H1 (cell line): ENCODE measurements at regions of chr11 and their contacts with region 1.

Region 1: GRCh38 chr11:57562596-57562995 is 4.9 kb downstream of the UBE2L6 start:
- DNase-seq: no peak
- H3K4me3 ChIP-seq: no peak overlapping the region
- H3K27ac ChIP-seq: no peak overlapping the region
- H3K4me1 ChIP-seq: peaks cover 4 to 7% (median 4%) of the 10 kb centered on the region in 4 experiments; a peak in 6 of 7 replicates
- H3K27me3 ChIP-seq: no peaks in the 10 kb centered on the region
- CTCF ChIP-seq: peak in 2 of 3 experiments; percentile 54 to 57; a peak in 3 of 4 replicates
- EP300 ChIP-seq: no peak
- POLR2A ChIP-seq: no peak
- RAD21 ChIP-seq: peak; percentile 73 to 79

Region 2: GRCh38 chr11:57015679-57016078 is 546.9 kb before region 1 on chr11:
- CTCF ChIA-PET with region 1: no interaction called
- POLR2A ChIA-PET with region 1: no interaction called
- DNase-seq: no peak
- H3K4me3 ChIP-seq: no peak overlapping the region
- H3K27ac ChIP-seq: no peak overlapping the region
- H3K4me1 ChIP-seq: no peaks in the 10 kb centered on the region
- H3K27me3 ChIP-seq: no peaks in the 10 kb centered on the region
- CTCF ChIP-seq: no peak
- EP300 ChIP-seq: no peak
- POLR2A ChIP-seq: no peak
- RAD21 ChIP-seq: no peak

Region 3: DNA sequence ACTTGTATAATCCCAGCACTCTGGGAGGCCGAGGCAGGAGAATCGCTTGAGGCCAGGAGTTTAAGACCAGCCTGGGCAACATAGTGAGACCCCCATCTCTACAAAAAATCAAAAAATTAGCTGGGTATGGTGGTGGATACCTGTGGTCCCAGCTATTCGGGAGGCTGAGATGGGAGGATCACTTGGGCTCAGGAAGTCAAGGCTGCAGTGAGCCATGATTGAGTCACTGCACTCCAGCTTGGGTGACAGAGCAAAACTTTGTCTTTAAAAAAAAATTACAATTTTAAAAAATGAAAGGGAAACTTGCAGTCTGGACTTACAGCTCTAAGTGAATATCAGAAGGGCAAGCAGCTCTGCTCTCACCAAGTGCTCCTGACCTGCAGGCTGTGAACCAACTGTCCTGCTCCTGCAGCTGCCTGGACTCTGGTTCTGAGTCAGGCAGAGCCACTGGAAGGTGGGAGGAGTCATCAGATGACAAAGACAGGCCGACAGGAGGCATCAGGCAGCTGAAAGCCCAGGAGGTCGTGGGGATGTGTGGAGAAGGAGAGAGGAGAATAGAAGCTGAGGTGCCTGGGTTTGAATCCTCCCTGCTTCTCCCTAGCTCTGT is 15.6 kb before region 1 on chr11:
- CTCF ChIA-PET with region 1: interaction called, 18 read pairs
- POLR2A ChIA-PET with region 1: interaction called, 8 read pairs
- DNase-seq: no peak
- H3K4me3 ChIP-seq: no peak overlapping the region
- H3K27ac ChIP-seq: no peak overlapping the region
- H3K4me1 ChIP-seq: peaks cover 0 to 15% (median 11%) of the 10 kb centered on the region in 4 experiments; a peak in 6 of 7 replicates
- H3K27me3 ChIP-seq: no peaks in the 10 kb centered on the region; a peak in 2 of 7 replicates
- CTCF ChIP-seq: peak in 2 of 3 experiments; percentile 19 to 21; a peak in 2 of 4 replicates
- EP300 ChIP-seq: no peak
- POLR2A ChIP-seq: no peak
- RAD21 ChIP-seq: peak; percentile 1 to 17; a peak in 1 of 4 replicates